AG04449 (cell line): ENCODE measurements at regions of chr5 and their contacts with region 1.

Region 1: GRCh38 chr5:79702606-79703382 is 13.2 kb downstream of the CMYA5 start:
- DNase-seq: no peak
- H3K4me3 ChIP-seq: no peak overlapping the region
- CTCF ChIP-seq: peak; percentile 45

Region 2: DNA sequence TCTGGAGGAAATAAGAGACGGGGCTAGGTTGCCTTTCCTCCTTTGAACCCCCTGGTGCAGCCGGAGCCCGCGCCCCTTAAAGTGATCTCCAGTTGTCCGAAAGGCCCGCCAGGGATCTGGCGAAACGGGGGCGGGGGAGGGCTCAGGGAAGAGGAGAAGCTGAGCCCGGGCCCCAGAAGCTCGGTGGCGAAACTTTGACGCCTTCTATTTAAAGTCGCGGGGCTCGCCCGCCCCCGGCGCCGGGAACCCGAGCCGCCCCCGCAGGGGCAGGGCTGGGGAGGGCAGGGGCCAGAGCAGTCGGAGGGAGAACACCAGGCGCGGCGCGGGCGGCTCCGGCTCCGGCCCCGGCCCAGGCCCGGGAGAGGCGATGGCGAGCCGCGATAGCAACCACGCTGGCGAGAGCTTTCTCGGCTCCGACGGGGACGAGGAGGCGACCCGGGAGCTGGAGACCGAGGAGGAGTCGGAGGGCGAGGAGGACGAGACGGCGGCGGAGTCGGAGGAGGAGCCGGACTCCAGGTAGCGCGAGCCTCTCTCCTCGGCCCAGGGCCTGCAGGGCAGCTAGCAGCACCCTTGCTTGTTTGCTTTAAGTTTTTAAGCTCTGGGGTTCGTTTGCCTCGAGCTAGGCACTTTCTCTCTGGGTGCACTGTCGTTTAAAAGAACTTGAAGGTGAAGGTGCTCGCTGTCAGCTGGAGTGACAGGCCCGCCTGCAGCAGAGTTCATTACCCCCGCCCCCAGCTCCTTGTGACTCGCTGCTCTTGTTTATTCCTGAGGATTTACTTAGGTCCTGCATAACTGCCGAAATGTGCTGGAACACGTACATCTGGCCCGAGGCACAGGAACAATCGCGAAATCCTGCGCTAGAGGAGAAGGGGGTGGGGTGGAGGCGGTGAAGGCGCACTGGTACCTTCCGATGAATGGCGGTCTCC is 13.0 kb before region 1 on chr5 and contains the start of gene CMYA5:
- CTCF ChIA-PET with region 1: interaction called, 17 read pairs
- POLR2A ChIA-PET with region 1: no interaction called
- DNase-seq: no peak
- H3K4me3 ChIP-seq: peak within 1 kb of the TSS; percentile 54
- CTCF ChIP-seq: no peak

Region 3: GRCh38 chr5:79716839-79717238 is 14.0 kb after region 1 on chr5:
- CTCF ChIA-PET with region 1: interaction called, 15 read pairs
- POLR2A ChIA-PET with region 1: no interaction called
- DNase-seq: no peak
- H3K4me3 ChIP-seq: no peak overlapping the region
- CTCF ChIP-seq: no peak